ENCODE measurements at regions of chr9 and their contacts with region 1.

Region 1: DNA sequence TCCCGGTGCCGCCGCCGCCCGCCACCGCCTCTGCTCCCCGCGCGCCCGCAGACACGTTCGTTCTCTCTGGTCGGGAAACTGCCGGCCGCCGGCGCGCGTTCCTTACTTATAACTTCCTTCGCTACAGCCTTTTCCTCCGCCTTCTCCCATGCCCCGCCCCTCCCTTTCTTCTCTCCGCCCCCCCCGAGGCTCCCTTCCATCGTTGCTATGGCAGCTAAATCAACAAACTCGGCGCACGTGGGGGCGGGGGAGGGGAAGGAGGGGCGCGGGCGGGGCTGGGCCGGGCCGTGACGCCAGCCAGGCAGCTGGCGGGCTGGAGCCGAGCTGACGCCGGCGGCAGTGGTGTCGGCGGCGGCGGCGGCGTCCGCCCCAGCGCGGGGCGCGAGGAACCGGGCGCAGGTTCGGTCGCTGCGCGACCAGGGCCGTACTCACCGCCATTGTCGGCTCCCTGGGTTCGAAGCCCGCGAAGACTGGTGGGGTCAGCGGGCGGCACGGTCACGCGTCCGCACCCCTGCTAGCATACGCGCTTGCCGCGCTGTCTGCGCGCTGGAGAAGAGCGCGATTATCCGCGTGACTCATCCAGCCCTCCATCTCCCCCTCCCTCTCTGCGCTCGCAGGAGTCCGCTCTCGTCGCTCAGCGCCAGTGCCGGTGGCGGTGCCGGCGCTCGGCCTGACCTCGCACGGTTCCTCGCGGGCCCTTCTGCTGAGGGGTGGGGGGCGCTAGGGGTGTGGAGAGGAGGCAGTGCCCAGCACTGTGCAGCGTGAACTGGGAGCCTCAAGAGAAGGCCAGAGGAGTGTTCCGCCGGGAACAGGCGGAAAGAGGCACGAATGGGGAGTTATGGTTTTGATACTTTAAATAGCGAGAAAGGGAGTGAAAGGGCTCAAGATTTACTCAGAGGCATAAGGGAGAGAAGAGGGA is at the start of gene KLF4:
- DNase-seq: peak; percentile 89 to 97 (median 96)
- ATAC-seq: peak; percentile 97
- H3K4me3 ChIP-seq: peak within 1 kb of the TSS; percentile 50
- H3K27ac ChIP-seq: no peak within 1 kb of the TSS
- H3K4me1 ChIP-seq: peaks cover 0 to 24% of the 10 kb centered on the region in 2 experiments; a peak in 3 of 5 replicates
- H3K27me3 ChIP-seq: peaks cover 12 to 34% of the 10 kb centered on the region in 2 experiments; a peak in 4 of 5 replicates
- CTCF ChIP-seq: no peak
- EP300 ChIP-seq: no peak
- POLR2A ChIP-seq: no peak
- RAD21 ChIP-seq: no peak
- polyA plus RNA-seq, gene KLF4: 0.04 to 0.07 TPM

Region 2: GRCh38 chr9:107340920-107341632 is 148.9 kb before region 1 on chr9:
- CTCF ChIA-PET with region 1: no interaction called
- POLR2A ChIA-PET with region 1: no interaction called
- in situ Hi-C with region 1: no loop called
- intact Hi-C with region 1: no loop called
- DNase-seq: peak; percentile 74 to 82 (median 80)
- ATAC-seq: peak; percentile 90
- H3K4me3 ChIP-seq: no peak overlapping the region
- H3K27ac ChIP-seq: no peak overlapping the region
- H3K4me1 ChIP-seq: no peaks in the 10 kb centered on the region; a peak in 1 of 5 replicates
- H3K27me3 ChIP-seq: no peaks in the 10 kb centered on the region
- CTCF ChIP-seq: peak; percentile 84 to 94 (median 88)
- EP300 ChIP-seq: no peak
- POLR2A ChIP-seq: peak; percentile 49; the same call in 1 of the 2 replicates
- RAD21 ChIP-seq: peak; percentile 59 to 78

Region 3: GRCh38 chr9:107874591-107875369 is 384.8 kb after region 1 on chr9:
- CTCF ChIA-PET with region 1: no interaction called
- POLR2A ChIA-PET with region 1: no interaction called
- in situ Hi-C with region 1: no loop called
- intact Hi-C with region 1: loop called (anchors 10 kb)
- DNase-seq: no peak
- ATAC-seq: no peak
- H3K4me3 ChIP-seq: no peak overlapping the region
- H3K27ac ChIP-seq: no peak overlapping the region
- H3K4me1 ChIP-seq: no peaks in the 10 kb centered on the region
- H3K27me3 ChIP-seq: peaks cover 13 to 16% of the 10 kb centered on the region in 2 experiments; a peak in 3 of 5 replicates
- CTCF ChIP-seq: no peak
- EP300 ChIP-seq: no peak
- POLR2A ChIP-seq: no peak
- RAD21 ChIP-seq: no peak

Region 4: DNA sequence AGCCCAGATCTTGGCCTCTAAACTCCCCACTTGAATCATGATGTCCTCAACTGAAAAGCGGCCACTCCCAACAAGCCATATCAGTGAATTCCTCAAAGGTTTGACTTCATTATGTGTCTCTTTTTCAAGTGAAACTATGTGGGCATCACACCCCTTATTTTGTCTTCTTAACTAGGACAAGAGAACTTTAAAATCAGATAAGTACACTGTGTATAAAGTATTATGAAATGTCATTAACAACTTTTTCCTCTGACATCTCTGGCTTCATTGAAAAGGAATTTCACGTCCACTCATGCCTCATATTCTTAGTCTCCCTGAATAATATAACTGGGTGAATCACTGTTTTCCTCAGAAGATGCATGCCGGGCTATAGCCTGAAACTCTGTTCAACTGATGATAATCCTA is 950.0 kb after region 1 on chr9:
- CTCF ChIA-PET with region 1: no interaction called
- POLR2A ChIA-PET with region 1: no interaction called
- in situ Hi-C with region 1: no loop called
- intact Hi-C with region 1: loop called (anchors 10 kb)
- DNase-seq: no peak
- ATAC-seq: no peak
- H3K4me3 ChIP-seq: no peak overlapping the region
- H3K27ac ChIP-seq: no peak overlapping the region
- H3K4me1 ChIP-seq: no peaks in the 10 kb centered on the region
- H3K27me3 ChIP-seq: no peaks in the 10 kb centered on the region
- CTCF ChIP-seq: no peak
- EP300 ChIP-seq: no peak
- POLR2A ChIP-seq: no peak
- RAD21 ChIP-seq: no peak

Measured in K562 (cell line).